Activated T-helper 2 cell treated with anti-CD3 and anti-CD28 coated beads, Interferon-gamma antibody, Interleukin-2, Interleukin-4, amounts not matched to agents 10 μg/mL and 5 μg/mL and 100 μg/mL, durations not matched to agents 14 hours and 24 hours and 36 hours (primary cell): ENCODE measurements at regions of chr15 and their contacts with region 1.

Region 1: DNA sequence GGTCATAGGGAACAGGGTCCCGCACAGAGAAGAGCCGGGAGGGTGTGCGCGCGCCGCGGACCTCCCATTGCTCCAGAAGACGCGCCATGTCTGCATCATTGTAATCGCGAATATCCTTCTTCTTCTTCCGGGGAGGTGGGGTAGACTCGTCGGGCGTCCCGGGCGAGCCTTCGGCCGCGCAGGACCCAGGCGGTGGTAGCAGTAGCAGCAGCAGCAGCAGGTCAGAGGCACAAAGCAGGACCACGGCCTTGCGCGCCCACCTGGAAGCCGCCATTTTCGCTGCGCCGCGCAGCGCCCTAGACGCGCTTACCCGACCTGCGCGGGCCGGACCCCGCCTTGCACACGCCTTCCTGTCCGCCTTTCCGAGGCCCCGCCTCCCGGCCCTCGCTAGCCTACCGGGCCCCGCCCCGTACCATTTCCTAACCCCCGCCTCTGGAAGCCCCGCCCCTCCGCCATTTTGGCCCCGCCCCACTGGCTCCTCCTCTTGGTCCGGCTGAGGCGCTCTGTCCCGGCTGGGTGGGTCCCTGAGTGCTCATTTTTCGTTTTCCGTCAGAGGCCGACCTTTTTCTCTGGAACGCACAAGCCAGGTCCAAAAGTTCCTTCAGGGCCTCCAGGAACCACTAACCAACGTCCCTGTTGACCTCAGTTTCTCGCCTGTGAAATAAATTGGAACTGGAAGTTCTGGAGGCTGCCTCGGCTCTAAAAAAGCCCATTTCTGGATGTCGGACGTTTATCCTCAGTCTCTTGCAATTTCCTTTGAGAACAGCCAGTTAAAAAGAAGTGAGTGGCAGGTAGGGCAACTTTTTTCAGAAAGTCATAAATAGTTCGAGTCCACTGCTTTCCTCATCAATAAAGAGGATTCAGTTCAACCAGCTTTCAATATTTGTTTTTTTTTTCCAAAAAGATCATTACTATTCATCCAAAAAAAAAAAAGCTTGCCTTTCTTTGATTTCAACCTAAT is at the start of gene MESD:
- DNase-seq: peak; percentile 92
- H3K4me3 Mint-ChIP-seq: peak within 1 kb of the TSS; percentile 97
- H3K27ac Mint-ChIP-seq: peak within 1 kb of the TSS; percentile 92
- H3K4me1 Mint-ChIP-seq: peaks cover 50% of the 10 kb centered on the region
- H3K27me3 Mint-ChIP-seq: no peaks in the 10 kb centered on the region
- total RNA-seq, gene MESD: 27.0 and 28.6 TPM in 2 replicates

Region 2: DNA sequence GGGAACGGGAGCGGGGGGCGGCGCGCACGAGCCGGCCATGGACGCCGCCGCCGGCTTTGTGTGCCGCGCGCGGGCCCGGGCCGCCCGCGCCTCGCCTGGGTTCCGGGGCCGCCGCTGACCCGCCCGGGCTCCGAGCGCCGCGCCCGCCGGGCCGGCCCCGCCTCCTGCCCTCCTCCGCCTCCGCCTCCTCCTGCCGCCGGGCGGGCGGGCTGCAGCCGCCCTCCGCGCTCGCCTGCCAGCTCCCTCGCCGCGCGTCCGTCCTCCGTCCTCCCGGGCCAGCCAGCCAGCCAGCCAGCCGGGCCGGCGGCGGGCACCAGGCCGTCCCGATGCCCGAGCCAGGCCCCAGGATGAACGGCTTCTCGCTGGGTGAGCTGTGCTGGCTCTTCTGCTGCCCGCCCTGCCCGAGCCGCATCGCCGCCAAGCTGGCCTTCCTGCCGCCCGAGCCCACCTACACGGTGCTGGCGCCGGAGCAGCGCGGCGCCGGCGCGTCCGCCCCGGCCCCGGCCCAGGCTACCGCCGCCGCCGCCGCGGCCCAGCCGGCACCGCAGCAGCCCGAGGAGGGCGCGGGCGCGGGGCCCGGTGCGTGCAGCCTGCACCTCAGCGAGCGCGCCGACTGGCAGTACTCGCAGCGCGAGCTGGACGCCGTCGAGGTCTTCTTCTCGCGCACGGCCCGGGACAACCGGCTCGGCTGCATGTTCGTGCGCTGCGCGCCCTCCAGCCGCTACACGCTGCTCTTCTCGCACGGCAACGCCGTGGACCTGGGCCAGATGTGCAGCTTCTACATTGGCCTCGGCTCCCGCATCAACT is 294.5 kb before region 1 on chr15 and contains the start of gene ABHD17C:
- intact Hi-C with region 1: loop called (anchors 5 kb)
- DNase-seq: peak; percentile 32
- H3K4me3 Mint-ChIP-seq: peak within 1 kb of the TSS; percentile 86
- H3K27ac Mint-ChIP-seq: peak within 1 kb of the TSS; percentile 43
- H3K4me1 Mint-ChIP-seq: peaks cover 16% of the 10 kb centered on the region
- H3K27me3 Mint-ChIP-seq: peaks cover 51% of the 10 kb centered on the region
- total RNA-seq, gene ABHD17C: 4.2 and 4.3 TPM in 2 replicates

Region 3: GRCh38 chr15:81000624-81001151 is 10.9 kb after region 1 on chr15 and contains the start of gene TLNRD1:
- intact Hi-C with region 1: loop called (anchors 1 kb)
- DNase-seq: peak; percentile 89
- H3K4me3 Mint-ChIP-seq: peak within 1 kb of the TSS; percentile 93
- H3K27ac Mint-ChIP-seq: peak within 1 kb of the TSS; percentile 95
- H3K4me1 Mint-ChIP-seq: peaks cover 45% of the 10 kb centered on the region
- H3K27me3 Mint-ChIP-seq: no peaks in the 10 kb centered on the region
- total RNA-seq, gene TLNRD1: 18.5 and 19.1 TPM in 2 replicates

Region 4: DNA sequence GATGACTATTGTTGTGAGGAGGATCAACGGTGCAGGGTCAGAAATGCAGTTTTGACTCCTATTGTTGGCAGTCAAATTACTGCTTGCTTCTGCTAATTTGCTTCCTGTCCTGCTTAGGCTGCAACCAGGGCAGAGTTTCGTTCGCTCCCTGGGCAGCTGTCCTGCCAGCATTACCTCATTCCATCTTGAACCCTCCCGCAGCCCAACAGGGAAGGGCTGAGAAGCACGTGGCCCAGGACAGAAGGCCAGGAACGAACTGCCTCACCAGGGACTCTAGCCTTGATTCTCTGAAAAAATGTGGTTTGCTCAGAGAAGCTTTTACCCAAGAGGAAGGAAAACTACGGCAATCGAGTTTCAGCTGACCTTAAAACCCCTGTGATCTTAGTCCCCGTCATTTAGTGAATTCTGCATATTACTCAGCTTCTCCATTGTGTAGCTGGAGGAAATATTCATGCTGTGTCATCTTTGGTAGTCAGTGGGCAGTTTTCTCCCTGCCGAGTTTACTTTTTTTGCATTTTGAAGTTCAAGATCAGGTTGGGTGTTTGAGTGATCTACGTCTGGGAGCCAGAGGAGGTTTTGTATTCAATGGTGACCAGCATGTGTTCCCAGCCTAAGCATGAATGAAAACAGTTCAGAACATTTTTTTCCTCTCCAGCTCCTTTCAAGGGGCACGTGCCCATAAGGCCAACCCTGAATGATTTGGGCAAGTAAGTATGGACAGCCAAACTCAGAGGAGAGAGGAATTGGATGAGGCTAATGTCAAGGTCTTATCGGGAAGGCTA is 33.9 kb after region 1 on chr15:
- intact Hi-C with region 1: loop called (anchors 5 kb)
- DNase-seq: peak; percentile 34
- H3K4me3 Mint-ChIP-seq: peak overlapping the region; percentile 10
- H3K27ac Mint-ChIP-seq: peak overlapping the region; percentile 92
- H3K4me1 Mint-ChIP-seq: peaks cover 35% of the 10 kb centered on the region
- H3K27me3 Mint-ChIP-seq: no peaks in the 10 kb centered on the region

Region 5: GRCh38 chr15:82046666-82047452 is 1057.1 kb after region 1 on chr15:
- intact Hi-C with region 1: loop called (anchors 5 kb)
- DNase-seq: peak; percentile 86
- H3K4me3 Mint-ChIP-seq: peak overlapping the region; percentile 89
- H3K27ac Mint-ChIP-seq: peak overlapping the region; percentile 89
- H3K4me1 Mint-ChIP-seq: peaks cover 7% of the 10 kb centered on the region
- H3K27me3 Mint-ChIP-seq: peaks cover 42% of the 10 kb centered on the region